Calu3 (cell line): ENCODE measurements at regions of chrX and their contacts with region 1.

Region 1: GRCh38 chrX:116239944-116240840 is 69.6 kb downstream of the AGTR2 start:
- DNase-seq: no peak
- H3K4me3 Mint-ChIP-seq: peak overlapping the region; percentile 68
- H3K27ac Mint-ChIP-seq: peak overlapping the region; percentile 95
- H3K4me1 Mint-ChIP-seq: peaks cover 33% of the 10 kb centered on the region
- H3K27me3 Mint-ChIP-seq: no peaks in the 10 kb centered on the region
- CTCF ChIP-seq: no peak

Region 2: DNA sequence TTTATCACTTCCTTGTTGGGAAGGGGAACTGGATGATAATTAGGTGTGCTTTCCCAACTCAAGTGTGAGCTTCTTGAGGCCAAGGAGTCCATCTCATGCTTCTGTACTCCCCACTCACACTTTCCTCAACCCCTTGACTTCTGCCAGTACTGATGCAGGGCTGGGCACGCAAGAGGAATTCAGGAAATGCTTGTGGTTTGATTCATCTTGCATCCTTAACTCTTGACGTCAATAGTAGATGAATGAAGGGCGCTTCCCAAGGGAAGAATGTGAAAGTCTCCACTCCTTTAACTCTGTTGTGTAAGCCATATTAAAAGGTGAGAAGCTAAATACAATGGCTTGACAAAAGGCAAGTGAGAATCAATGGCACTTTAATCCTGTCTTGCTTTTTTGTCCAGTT is 32.1 kb after region 1 on chrX:
- CTCF ChIA-PET with region 1: no interaction called
- intact Hi-C with region 1: loop called (anchors 1 kb)
- DNase-seq: peak; percentile 65
- H3K4me3 Mint-ChIP-seq: peak overlapping the region; percentile 17
- H3K27ac Mint-ChIP-seq: peak overlapping the region; percentile 98
- H3K4me1 Mint-ChIP-seq: peaks cover 23% of the 10 kb centered on the region
- H3K27me3 Mint-ChIP-seq: no peaks in the 10 kb centered on the region
- CTCF ChIP-seq: no peak

Region 3: GRCh38 chrX:116284386-116284785 is 44.2 kb after region 1 on chrX:
- CTCF ChIA-PET with region 1: no interaction called
- intact Hi-C with region 1: loop called (anchors 2 kb)
- DNase-seq: no peak
- H3K4me3 Mint-ChIP-seq: no peak overlapping the region
- H3K27ac Mint-ChIP-seq: peak overlapping the region; percentile 75
- H3K4me1 Mint-ChIP-seq: peaks cover 38% of the 10 kb centered on the region
- H3K27me3 Mint-ChIP-seq: no peaks in the 10 kb centered on the region
- CTCF ChIP-seq: no peak

Region 4: GRCh38 chrX:116339407-116339806 is 99.2 kb after region 1 on chrX:
- CTCF ChIA-PET with region 1: no interaction called
- intact Hi-C with region 1: no loop called
- DNase-seq: no peak
- H3K4me3 Mint-ChIP-seq: no peak overlapping the region
- H3K27ac Mint-ChIP-seq: no peak overlapping the region
- H3K4me1 Mint-ChIP-seq: no peaks in the 10 kb centered on the region
- H3K27me3 Mint-ChIP-seq: no peaks in the 10 kb centered on the region
- CTCF ChIP-seq: no peak

Region 5: GRCh38 chrX:116409219-116409618 is 169.0 kb after region 1 on chrX:
- CTCF ChIA-PET with region 1: no interaction called
- intact Hi-C with region 1: loop called (anchors 5 kb)
- DNase-seq: no peak
- H3K4me3 Mint-ChIP-seq: no peak overlapping the region
- H3K27ac Mint-ChIP-seq: no peak overlapping the region
- H3K4me1 Mint-ChIP-seq: peaks cover 55% of the 10 kb centered on the region
- H3K27me3 Mint-ChIP-seq: no peaks in the 10 kb centered on the region
- CTCF ChIP-seq: no peak